ENCODE measurements at regions of chr7 and their contacts with region 1.

Region 1: DNA sequence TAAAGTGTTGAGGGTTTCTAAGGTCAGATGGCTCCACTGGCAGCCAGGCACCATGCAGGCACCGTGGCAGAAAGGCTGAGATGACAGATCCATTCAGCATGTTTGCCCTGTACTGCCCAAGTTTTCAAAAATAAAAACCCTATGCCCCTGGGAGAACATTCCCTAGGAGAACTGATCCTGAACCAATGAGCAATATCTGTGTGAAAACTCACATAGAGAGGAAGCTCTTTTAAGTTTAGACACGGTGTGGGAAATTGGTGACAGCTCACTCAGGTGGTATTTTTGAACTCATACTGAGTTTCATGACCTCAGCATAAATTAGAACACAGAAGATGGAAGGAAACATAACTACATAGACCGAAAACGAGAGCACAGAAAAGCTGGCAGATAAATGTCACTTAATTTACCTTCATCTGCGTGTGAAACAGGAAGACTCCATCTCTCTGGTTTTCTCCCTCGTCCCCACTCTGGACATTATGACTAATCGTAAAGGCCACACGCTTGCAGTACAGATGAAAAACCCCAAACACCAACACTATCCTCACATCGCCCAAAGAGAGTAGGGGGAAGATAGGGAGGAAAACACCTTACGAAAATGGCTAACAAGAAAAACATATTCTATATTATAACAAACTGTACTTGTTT is 127.8 kb downstream of the ICA1 start:
- DNase-seq: no peak
- H3K4me3 ChIP-seq: no peak overlapping the region
- H3K27ac ChIP-seq: no peak overlapping the region
- H3K27me3 ChIP-seq: no peaks in the 10 kb centered on the region
- CTCF ChIP-seq: no peak

Region 2: GRCh38 chr7:7032210-7032609 is 1102.0 kb before region 1 on chr7:
- CTCF ChIA-PET with region 1: no interaction called
- POLR2A ChIA-PET with region 1: interaction called, 14 read pairs
- DNase-seq: no peak
- H3K4me3 ChIP-seq: no peak overlapping the region
- H3K27ac ChIP-seq: no peak overlapping the region
- H3K27me3 ChIP-seq: no peaks in the 10 kb centered on the region
- CTCF ChIP-seq: no peak

Measured in AG04450 (cell line).